K562 (cell line): ENCODE measurements at regions of chr3 and their contacts with region 1.

Region 1: GRCh38 chr3:189961525-189962161 is 159.1 kb downstream of the P3H2 start:
- DNase-seq: peak; percentile 51 to 62 (median 52)
- ATAC-seq: peak; percentile 74
- H3K4me3 ChIP-seq: no peak overlapping the region
- H3K27ac ChIP-seq: no peak overlapping the region
- H3K4me1 ChIP-seq: no peaks in the 10 kb centered on the region
- H3K27me3 ChIP-seq: no peaks in the 10 kb centered on the region
- CTCF ChIP-seq: peak; percentile 67 to 83 (median 82)
- EP300 ChIP-seq: no peak
- POLR2A ChIP-seq: no peak
- RAD21 ChIP-seq: peak; percentile 51 to 72

Region 2: DNA sequence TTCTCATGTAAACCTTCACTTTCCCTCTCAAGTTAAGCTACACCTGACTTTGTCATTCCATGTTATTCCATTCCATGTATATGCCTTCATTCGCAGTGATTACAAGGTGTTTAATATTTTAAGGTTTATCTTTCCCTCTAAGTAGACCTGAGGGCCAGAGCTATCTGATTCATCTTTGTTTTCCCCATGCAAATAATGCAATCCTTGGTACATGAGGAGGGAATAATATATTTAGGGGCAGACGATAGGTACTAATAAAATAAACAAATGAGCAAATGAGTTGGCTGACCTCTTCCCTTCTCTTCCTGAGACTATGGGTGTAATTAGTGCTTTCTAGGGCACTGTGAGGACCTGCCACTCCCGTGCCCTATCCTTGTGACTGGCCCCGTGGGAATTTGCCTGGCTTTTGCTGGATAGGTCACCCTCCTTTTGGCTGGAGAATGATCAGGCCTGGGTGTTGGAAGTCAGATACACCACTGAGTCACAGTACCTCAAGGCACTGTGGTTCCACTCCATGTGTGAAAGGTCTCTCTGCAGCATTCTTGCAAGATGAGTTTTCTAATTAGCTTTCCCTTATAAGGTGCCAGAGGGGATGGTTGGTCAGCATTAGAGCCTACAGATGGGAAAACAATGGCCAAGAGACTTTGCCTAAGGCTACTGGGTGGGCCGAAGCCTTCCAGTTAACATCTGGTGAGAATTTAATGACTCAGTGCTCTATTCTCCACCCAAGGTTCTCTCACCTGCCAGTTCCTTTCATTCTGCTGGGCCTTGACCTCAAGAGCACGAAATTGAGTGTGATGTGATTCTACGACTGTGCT is 24.1 kb before region 1 on chr3:
- CTCF ChIA-PET with region 1: no interaction called
- POLR2A ChIA-PET with region 1: no interaction called
- in situ Hi-C with region 1: no loop called
- intact Hi-C with region 1: no loop called
- DNase-seq: no peak
- ATAC-seq: no peak
- H3K4me3 ChIP-seq: no peak overlapping the region
- H3K27ac ChIP-seq: no peak overlapping the region
- H3K4me1 ChIP-seq: no peaks in the 10 kb centered on the region
- H3K27me3 ChIP-seq: no peaks in the 10 kb centered on the region
- CTCF ChIP-seq: no peak
- EP300 ChIP-seq: no peak
- POLR2A ChIP-seq: no peak
- RAD21 ChIP-seq: no peak

Region 3: DNA sequence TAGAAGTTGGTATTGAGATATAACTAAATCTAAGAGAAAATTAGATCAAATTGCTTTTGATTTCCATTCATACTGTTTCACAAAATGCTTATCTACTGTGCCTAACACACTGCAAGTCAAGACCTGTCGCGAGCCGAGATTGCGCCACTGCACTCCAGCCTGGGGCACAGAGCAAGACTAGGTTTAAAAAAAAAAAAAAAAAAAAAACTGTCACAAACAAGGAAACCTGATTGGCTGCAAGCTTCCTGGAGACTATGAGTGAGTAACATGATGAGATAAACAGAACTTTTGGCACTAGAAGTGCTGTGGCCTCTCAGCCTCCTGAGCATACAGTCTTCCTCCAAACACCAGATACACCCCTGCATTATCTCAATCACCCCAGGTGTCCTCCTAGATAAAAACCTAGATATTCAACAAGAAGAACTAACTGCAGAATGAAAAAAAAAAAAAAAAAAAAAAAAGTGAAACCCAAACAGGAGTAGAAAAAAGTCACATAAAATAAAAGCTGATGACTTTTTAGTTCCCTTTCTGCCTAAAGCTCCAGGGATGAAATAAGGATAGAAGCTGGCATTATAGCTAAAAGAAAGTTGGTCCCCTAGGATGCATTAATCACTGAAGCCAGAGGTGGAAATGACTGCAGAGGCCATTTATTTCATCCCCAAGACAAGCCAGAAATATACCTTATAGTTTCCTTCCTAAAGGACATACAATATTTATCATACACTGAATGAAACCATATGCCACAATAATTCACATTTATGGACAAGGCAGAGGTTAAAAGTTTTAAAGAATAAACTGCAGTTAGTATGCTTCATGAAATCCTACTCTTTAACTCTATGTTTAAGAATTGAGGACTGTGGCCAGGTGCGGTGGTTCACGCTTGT is 76.6 kb after region 1 on chr3:
- CTCF ChIA-PET with region 1: no interaction called
- POLR2A ChIA-PET with region 1: no interaction called
- in situ Hi-C with region 1: no loop called
- intact Hi-C with region 1: no loop called
- DNase-seq: no peak
- ATAC-seq: no peak
- H3K4me3 ChIP-seq: no peak overlapping the region
- H3K27ac ChIP-seq: no peak overlapping the region
- H3K4me1 ChIP-seq: no peaks in the 10 kb centered on the region
- H3K27me3 ChIP-seq: no peaks in the 10 kb centered on the region
- CTCF ChIP-seq: no peak
- EP300 ChIP-seq: no peak
- POLR2A ChIP-seq: no peak
- RAD21 ChIP-seq: no peak

Region 4: DNA sequence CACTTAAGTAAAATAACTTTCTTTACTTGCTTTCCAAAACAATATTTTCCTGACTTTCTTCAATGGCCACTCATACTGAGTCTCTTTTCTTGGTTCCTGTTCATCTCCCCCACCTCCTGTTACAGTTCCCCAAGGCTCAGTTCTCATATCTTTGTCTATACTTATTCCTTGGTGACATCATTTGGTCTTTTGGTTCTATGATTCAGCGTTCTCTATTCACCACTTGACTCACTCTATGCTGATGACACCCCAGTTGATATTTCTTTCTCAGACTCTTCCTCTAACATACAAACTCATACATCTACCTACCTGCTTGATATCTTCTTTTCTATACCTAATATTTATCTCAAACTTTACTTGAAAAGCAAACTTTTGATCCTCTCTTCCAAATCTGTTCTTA is 244.1 kb after region 1 on chr3:
- CTCF ChIA-PET with region 1: interaction called, 4 read pairs
- POLR2A ChIA-PET with region 1: no interaction called
- in situ Hi-C with region 1: no loop called
- intact Hi-C with region 1: loop called (anchors 1 kb)
- DNase-seq: no peak
- ATAC-seq: no peak
- H3K4me3 ChIP-seq: no peak overlapping the region
- H3K27ac ChIP-seq: no peak overlapping the region
- H3K4me1 ChIP-seq: no peaks in the 10 kb centered on the region
- H3K27me3 ChIP-seq: no peaks in the 10 kb centered on the region
- CTCF ChIP-seq: no peak
- EP300 ChIP-seq: no peak
- POLR2A ChIP-seq: no peak
- RAD21 ChIP-seq: no peak

Region 5: GRCh38 chr3:191051037-191051436 is 1089.4 kb after region 1 on chr3:
- CTCF ChIA-PET with region 1: no interaction called
- POLR2A ChIA-PET with region 1: no interaction called
- in situ Hi-C with region 1: no loop called
- intact Hi-C with region 1: loop called (anchors 10 kb)
- DNase-seq: peak in 1 of 4 experiments; percentile 0
- ATAC-seq: no peak
- H3K4me3 ChIP-seq: no peak overlapping the region
- H3K27ac ChIP-seq: no peak overlapping the region
- H3K4me1 ChIP-seq: no peaks in the 10 kb centered on the region
- H3K27me3 ChIP-seq: no peaks in the 10 kb centered on the region
- CTCF ChIP-seq: peak in 1 of 3 experiments; percentile 17; a peak in 1 of 6 replicates
- EP300 ChIP-seq: no peak
- POLR2A ChIP-seq: no peak
- RAD21 ChIP-seq: peak in 1 of 2 experiments; percentile 37; a peak in 2 of 4 replicates